ENCODE measurements at regions of chr6 and their contacts with region 1.

Region 1: DNA sequence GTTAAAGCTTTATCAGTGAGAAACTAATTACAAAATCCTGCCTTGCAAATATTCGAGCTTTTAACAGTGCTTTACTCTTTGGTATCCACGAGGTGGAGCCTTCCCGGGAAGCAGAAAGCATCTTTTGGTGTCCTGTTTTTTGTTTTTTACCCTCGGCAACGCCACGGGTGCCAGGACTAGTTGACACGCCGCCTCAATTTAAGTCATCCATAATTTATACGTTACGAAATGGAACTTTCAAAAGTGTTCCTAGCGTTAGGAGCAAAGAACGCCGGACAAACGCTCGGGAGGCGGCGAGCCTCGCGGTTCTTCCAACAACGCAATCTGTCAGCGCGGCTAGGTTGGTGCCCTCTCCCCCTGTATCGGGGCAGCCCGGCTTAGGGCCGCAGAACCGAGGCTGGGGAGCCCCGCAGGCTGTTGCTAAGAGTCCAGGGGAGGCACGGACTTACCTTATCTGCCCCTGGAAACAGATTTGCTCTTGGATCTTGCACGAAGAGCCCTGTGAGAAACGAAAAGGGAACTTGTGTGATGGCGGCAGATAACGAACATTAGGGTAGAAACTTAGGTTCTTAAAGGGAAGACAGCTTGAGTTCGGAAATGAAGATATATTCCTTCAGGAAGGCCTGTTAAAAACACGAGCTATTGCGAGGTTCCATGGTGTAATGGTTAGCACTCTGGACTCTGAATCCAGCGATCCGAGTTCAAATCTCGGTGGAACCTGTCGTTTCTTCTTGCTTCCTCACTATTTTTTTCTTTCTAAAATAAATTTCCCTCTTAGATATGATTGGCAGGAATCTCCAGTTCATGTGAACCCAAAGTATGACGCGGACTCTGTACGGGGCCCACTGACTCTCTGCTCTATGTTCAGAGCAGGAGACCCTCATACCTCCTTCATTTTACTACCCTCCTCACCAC is 46.2 kb upstream of the ZNF184 start:
- DNase-seq: peak; percentile 70
- H3K4me3 Mint-ChIP-seq: peak overlapping the region; percentile 79
- H3K27ac Mint-ChIP-seq: peak overlapping the region; percentile 77
- H3K4me1 Mint-ChIP-seq: peaks cover 19% of the 10 kb centered on the region
- H3K27me3 Mint-ChIP-seq: peaks cover 17% of the 10 kb centered on the region

Region 2: GRCh38 chr6:27503436-27504030 is 15.6 kb before region 1 on chr6:
- CTCF ChIA-PET with region 1: interaction called, 11 read pairs
- POLR2A ChIA-PET with region 1: interaction called, 5 read pairs
- intact Hi-C with region 1: loop called (anchors 1 kb)
- DNase-seq: peak; percentile 86
- H3K4me3 Mint-ChIP-seq: peak overlapping the region; percentile 88
- H3K27ac Mint-ChIP-seq: peak overlapping the region; percentile 85
- H3K4me1 Mint-ChIP-seq: peaks cover 26% of the 10 kb centered on the region
- H3K27me3 Mint-ChIP-seq: peaks cover 10% of the 10 kb centered on the region

Region 3: GRCh38 chr6:27608916-27609883 is 90.1 kb after region 1 on chr6:
- CTCF ChIA-PET with region 1: interaction called, 30 read pairs
- POLR2A ChIA-PET with region 1: no interaction called
- intact Hi-C with region 1: loop called (anchors 1 kb)
- DNase-seq: peak; percentile 16
- H3K4me3 Mint-ChIP-seq: no peak overlapping the region
- H3K27ac Mint-ChIP-seq: no peak overlapping the region
- H3K4me1 Mint-ChIP-seq: peaks cover 9% of the 10 kb centered on the region
- H3K27me3 Mint-ChIP-seq: peaks cover 36% of the 10 kb centered on the region

Region 4: GRCh38 chr6:27795697-27796494 is 276.8 kb after region 1 on chr6:
- CTCF ChIA-PET with region 1: interaction called, 10 read pairs
- POLR2A ChIA-PET with region 1: no interaction called
- intact Hi-C with region 1: loop called (anchors 2 kb)
- DNase-seq: peak; percentile 39
- H3K4me3 Mint-ChIP-seq: no peak overlapping the region
- H3K27ac Mint-ChIP-seq: peak overlapping the region; percentile 67
- H3K4me1 Mint-ChIP-seq: peaks cover 22% of the 10 kb centered on the region
- H3K27me3 Mint-ChIP-seq: peaks cover 8% of the 10 kb centered on the region